ENCODE measurements at regions of chr2 and their contacts with region 1.

Region 1: GRCh38 chr2:176140513-176141317 is 10.6 kb upstream of the HOXD4 start:
- DNase-seq: no peak
- ATAC-seq: peak; percentile 92
- H3K4me3 ChIP-seq: peak overlapping the region; percentile 48 to 58
- H3K27ac ChIP-seq: peak overlapping the region; percentile 71
- H3K4me1 ChIP-seq: peaks cover 4% of the 10 kb centered on the region; the same call in 1 of the 2 replicates
- H3K27me3 ChIP-seq: no peaks in the 10 kb centered on the region
- CTCF ChIP-seq: peak; percentile 96

Region 2: GRCh38 chr2:175600024-175600831 is 540.5 kb before region 1 on chr2:
- CTCF ChIA-PET with region 1: no interaction called
- POLR2A ChIA-PET with region 1: no interaction called
- in situ Hi-C with region 1: no loop called
- intact Hi-C with region 1: no loop called
- DNase-seq: no peak
- ATAC-seq: no peak
- H3K4me3 ChIP-seq: no peak overlapping the region
- H3K27ac ChIP-seq: no peak overlapping the region
- H3K4me1 ChIP-seq: no peaks in the 10 kb centered on the region
- H3K27me3 ChIP-seq: no peaks in the 10 kb centered on the region
- CTCF ChIP-seq: no peak

Region 3: GRCh38 chr2:176154853-176155252 is 14.1 kb after region 1 on chr2:
- CTCF ChIA-PET with region 1: interaction called, 13 read pairs
- POLR2A ChIA-PET with region 1: no interaction called
- in situ Hi-C with region 1: no loop called
- intact Hi-C with region 1: no loop called
- DNase-seq: no peak
- ATAC-seq: no peak
- H3K4me3 ChIP-seq: no peak overlapping the region
- H3K27ac ChIP-seq: no peak overlapping the region
- H3K4me1 ChIP-seq: peaks cover 3% of the 10 kb centered on the region; the same call in 1 of the 2 replicates
- H3K27me3 ChIP-seq: peaks cover 2% of the 10 kb centered on the region; the same call in 1 of the 2 replicates
- CTCF ChIP-seq: no peak

Region 4: GRCh38 chr2:176317199-176317598 is 176.5 kb after region 1 on chr2:
- CTCF ChIA-PET with region 1: no interaction called
- POLR2A ChIA-PET with region 1: no interaction called
- in situ Hi-C with region 1: no loop called
- intact Hi-C with region 1: no loop called
- DNase-seq: no peak
- ATAC-seq: no peak
- H3K4me3 ChIP-seq: no peak overlapping the region
- H3K27ac ChIP-seq: no peak overlapping the region
- H3K4me1 ChIP-seq: no peaks in the 10 kb centered on the region
- H3K27me3 ChIP-seq: no peaks in the 10 kb centered on the region
- CTCF ChIP-seq: no peak

Region 5: DNA sequence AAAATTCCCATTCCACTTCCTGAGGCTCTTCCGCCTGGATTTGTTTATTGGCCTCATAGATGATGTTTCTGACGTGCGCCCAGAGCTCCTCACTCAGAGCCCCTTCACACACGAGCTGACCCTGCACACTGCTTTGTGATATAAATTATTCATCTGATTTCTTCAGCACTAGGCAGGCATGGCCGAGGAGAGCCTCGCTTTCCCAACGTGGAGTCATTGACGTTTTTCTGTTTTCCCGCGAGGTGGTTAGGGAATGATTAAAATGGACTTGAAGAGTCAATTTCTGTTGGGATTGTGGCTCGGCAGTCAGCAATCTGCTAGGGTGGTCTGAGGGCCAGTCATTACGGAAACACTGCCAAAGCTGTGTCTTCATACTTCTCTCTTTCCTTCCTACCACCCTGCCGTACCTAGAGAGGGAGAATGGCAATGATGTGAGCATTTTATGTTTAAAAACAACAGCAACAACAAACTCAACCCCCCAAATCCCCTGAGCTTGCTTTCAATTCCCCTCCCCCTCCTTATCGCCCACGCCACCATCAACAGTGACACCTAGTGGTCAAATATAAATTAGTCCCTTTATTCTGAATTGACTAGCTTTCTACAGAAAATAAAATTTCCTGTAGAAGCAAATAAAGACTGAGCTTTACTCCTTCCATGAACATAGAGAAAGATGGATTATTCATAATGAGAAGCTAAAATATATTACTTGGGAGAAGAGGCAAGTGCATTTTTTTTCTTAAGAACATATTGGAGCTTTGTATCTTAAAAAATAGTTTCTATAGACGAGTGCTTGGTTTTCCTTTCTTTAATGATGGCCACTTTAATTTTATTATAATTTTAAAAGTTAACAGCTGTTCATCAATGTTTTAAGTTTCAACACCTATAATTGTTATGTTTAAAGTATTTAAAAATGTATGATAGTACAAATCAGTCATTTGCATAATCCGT is 413.7 kb after region 1 on chr2:
- CTCF ChIA-PET with region 1: interaction called, 14 read pairs
- POLR2A ChIA-PET with region 1: no interaction called
- in situ Hi-C with region 1: no loop called
- intact Hi-C with region 1: loop called (anchors 1 kb)
- DNase-seq: peak; percentile 32
- ATAC-seq: peak; percentile 78
- H3K4me3 ChIP-seq: peak overlapping the region; percentile 49 to 78
- H3K27ac ChIP-seq: peak overlapping the region; percentile 73
- H3K4me1 ChIP-seq: peaks cover 5% of the 10 kb centered on the region; the same call in 1 of the 2 replicates
- H3K27me3 ChIP-seq: no peaks in the 10 kb centered on the region
- CTCF ChIP-seq: peak; percentile 81

Region 6: GRCh38 chr2:176653479-176654443 is 513.0 kb after region 1 on chr2:
- CTCF ChIA-PET with region 1: interaction called, 19 read pairs
- POLR2A ChIA-PET with region 1: no interaction called
- in situ Hi-C with region 1: no loop called
- intact Hi-C with region 1: no loop called
- DNase-seq: no peak
- ATAC-seq: peak; percentile 92
- H3K4me3 ChIP-seq: no peak overlapping the region
- H3K27ac ChIP-seq: no peak overlapping the region
- H3K4me1 ChIP-seq: no peaks in the 10 kb centered on the region
- H3K27me3 ChIP-seq: no peaks in the 10 kb centered on the region
- CTCF ChIP-seq: peak; percentile 86